ENCODE measurements at regions of chr4 and their contacts with region 1.

Region 1: DNA sequence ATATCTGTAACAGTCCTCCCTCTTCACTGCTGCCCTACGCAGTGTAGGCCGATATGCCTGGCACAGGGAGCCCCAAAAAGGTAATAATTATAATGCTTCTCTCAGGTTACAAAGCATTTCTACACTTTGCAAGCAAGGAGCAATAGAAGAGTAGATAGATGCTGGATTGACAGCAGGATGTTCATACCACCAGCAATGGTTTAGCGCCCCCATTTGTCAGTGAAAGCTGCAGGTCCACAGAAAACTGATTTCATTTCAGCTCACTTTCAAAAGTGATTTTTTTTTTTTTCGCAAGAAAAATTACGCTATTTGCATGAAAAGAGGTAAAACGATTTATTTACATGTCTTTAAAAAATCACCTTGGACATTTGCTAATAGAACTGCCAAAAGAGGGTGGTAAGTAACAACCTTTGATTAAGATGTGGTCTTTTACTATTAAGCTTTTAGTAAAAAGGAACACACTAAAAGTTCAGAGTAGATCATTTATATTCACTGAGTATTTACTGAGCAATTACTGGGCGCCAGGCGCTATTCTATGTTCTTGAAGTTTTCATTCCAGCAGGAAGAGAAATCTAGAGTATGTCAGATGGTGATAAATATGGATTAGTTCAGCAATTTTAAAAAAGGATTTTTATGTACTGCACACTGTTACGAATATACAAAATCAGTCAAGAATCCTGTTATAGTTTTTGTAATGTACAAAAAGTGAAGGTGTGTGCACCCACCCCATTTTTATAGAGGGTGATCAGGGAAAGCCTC is 34.4 kb downstream of the HPF1 start:
- DNase-seq: peak; percentile 20
- ATAC-seq: no peak
- H3K4me3 Mint-ChIP-seq: no peak overlapping the region
- H3K27ac Mint-ChIP-seq: no peak overlapping the region
- H3K4me1 Mint-ChIP-seq: peaks cover 11% of the 10 kb centered on the region
- H3K27me3 Mint-ChIP-seq: no peaks in the 10 kb centered on the region

Region 2: DNA sequence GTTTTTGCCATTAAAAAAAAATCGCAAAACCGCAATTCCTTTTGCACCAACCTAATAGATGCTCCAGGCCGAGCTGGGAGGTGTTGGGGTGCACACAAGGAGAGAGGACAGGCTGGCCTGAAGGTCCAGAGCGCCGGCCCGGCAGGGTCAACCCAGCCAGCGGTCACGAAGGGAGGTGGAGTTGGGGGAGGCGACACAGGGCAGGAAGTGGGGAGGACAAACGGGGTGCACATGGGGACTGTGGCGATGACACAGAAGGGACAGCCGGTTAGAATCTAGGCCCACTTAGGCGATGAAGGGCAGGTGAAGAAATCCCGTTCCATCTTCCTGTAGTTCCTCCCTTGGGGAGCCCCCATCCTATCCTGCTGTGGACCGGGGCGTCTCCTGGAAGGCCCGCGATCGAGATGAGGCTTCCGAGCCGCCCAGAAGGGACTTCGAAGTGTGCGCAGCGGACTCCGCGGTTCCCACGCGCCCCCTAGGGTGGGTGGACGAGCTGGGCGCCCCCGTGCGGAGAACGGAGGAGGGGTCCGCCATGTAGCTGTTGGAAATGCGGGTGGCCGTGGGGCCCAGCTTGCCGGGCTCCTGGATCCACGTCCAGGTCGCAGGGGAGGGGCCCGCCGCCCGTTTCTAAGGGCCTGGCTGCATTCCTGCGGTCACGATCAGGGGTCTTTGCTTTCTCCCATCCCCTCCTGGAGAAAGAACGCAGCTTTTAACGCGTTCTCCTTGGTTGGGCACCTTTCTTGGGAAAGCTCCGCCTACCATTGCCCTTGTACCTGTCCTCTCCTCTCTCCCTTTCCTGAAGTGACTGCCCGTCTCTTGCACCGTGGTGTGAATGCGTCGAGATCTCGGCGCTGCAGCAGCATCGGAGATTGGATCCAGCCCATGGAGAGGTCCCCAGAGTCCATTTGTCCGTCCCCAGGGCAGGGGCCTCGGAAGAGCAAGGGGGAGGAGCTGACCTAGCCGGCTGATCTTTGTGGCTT is 51.4 kb after region 1 on chr4:
- CTCF ChIA-PET with region 1: no interaction called
- POLR2A ChIA-PET with region 1: interaction called, 12 read pairs
- intact Hi-C with region 1: no loop called
- DNase-seq: peak; percentile 50
- ATAC-seq: peak; percentile 47
- H3K4me3 Mint-ChIP-seq: peak overlapping the region; percentile 28
- H3K27ac Mint-ChIP-seq: no peak overlapping the region
- H3K4me1 Mint-ChIP-seq: peaks cover 6% of the 10 kb centered on the region
- H3K27me3 Mint-ChIP-seq: peaks cover 20% of the 10 kb centered on the region

Measured in activated CD4-positive, alpha-beta T cell treated with anti-CD3 and anti-CD28 coated beads for 36 hours (primary cell).